Mammary epithelial cell (primary cell): ENCODE measurements at regions of chr2 and their contacts with region 1.

Region 1: DNA sequence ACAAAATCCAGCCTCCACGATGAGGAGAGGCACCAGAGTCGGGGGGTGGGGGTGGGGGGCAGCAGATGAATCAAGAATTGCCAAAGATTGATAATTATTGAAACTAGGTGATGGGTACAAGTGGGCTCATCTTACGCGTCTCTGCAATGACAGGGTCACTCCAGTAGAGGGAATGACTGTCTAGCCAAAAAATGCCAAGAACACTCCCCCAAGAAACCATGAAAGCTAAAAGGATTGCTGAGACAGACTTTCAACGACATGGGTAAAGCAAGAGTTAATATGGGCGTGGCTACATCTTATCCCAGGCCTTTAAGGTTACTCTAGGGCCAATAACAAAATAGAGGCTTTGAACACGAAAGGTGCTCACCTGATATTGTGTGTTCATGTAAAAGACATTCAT is 86.5 kb downstream of the STK39 start:
- DNase-seq: no peak
- H3K4me3 ChIP-seq: no peak overlapping the region
- H3K27ac ChIP-seq: no peak overlapping the region
- H3K4me1 ChIP-seq: peaks cover 11% of the 10 kb centered on the region
- H3K27me3 ChIP-seq: no peaks in the 10 kb centered on the region
- CTCF ChIP-seq: peak; percentile 29 to 45

Region 2: DNA sequence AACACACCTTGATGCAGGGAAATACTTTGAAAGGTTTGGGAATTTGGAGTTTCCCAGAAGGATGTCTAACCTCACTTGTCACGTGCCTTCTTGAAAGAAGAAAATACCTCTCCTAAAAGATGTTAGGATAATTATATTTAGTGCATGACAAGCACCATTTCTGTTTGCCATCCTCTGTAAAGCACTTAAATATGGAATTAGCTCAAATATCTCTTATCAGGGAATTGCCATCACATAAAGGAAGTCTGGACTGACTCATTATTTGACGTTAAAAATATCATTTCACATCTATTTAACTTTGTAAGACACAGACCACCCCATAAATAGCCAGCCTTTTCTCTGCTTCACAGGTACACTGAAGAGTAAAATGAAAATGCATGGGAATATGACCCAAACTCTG is 53.6 kb before region 1 on chr2:
- CTCF ChIA-PET with region 1: no interaction called
- dilution Hi-C with region 1: no loop called
- in situ Hi-C with region 1: no loop called
- intact Hi-C with region 1: no loop called
- DNase-seq: no peak
- H3K4me3 ChIP-seq: no peak overlapping the region
- H3K27ac ChIP-seq: no peak overlapping the region
- H3K4me1 ChIP-seq: no peaks in the 10 kb centered on the region
- H3K27me3 ChIP-seq: no peaks in the 10 kb centered on the region
- CTCF ChIP-seq: no peak

Region 3: DNA sequence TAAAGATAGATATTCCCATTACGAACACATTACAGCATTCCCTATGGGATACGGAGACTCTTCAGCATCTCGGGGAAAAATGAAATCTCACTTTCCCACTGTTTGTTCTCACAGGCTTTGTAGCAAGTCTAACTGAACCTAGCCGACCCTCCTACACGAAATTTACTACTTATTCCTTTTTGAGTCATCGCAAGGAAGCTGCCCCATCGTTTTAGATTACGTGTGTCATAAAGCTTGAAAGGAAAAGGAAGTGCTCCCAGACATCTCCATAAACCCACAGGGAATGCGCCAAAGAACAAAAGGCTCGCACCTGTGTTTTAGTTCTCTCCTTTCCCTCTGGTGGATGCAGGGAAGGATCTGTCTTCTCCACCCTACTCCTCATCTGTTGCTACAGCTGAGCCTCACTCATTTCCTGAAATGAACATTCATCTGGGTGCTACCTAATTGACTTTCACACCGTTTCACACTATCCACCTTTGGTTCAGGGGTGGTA is 162.7 kb after region 1 on chr2:
- CTCF ChIA-PET with region 1: no interaction called
- dilution Hi-C with region 1: no loop called
- in situ Hi-C with region 1: no loop called
- intact Hi-C with region 1: loop called (anchors 5 kb)
- DNase-seq: no peak
- H3K4me3 ChIP-seq: no peak overlapping the region
- H3K27ac ChIP-seq: no peak overlapping the region
- H3K4me1 ChIP-seq: peaks cover 5% of the 10 kb centered on the region
- H3K27me3 ChIP-seq: peaks cover 3% of the 10 kb centered on the region
- CTCF ChIP-seq: no peak

Region 4: GRCh38 chr2:168336864-168337263 is 176.0 kb after region 1 on chr2:
- CTCF ChIA-PET with region 1: interaction called, 9 read pairs
- dilution Hi-C with region 1: no loop called
- in situ Hi-C with region 1: no loop called
- intact Hi-C with region 1: loop called (anchors 2 kb)
- DNase-seq: peak; percentile 83
- H3K4me3 ChIP-seq: no peak overlapping the region
- H3K27ac ChIP-seq: no peak overlapping the region
- H3K4me1 ChIP-seq: peaks cover 4% of the 10 kb centered on the region
- H3K27me3 ChIP-seq: no peaks in the 10 kb centered on the region
- CTCF ChIP-seq: peak; percentile 82 to 94

Region 5: DNA sequence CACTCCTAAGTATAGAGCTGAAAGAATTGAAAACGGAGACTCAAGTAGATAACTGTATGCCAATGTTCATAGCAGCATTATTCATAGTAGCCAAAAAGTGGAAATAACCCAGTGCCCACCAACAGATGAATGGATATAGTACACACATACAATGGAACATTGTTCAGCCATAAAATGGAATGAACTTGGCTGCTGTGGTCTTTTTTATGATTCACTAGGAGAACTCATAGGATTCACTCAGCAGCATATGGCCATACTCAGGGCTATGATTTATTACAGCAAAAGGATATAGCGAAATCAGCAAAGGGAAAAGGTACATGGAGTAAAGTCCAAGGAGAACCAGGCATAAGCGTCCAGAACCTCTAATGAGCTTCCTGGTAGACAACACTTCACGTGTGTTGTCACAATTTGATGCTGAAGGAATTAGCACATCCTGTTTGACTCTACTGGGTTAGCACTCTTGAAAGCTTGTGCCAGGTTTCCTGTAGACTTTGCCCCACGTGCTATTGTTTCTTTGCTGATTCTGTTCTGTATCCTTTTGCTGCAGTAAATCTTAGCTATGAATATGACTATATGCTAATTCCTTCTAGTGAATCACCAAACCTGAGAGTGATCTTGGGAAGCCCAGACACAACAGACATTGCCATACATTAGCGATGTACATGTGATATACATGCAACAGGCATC is 713.6 kb after region 1 on chr2:
- CTCF ChIA-PET with region 1: no interaction called
- dilution Hi-C with region 1: no loop called
- in situ Hi-C with region 1: no loop called
- intact Hi-C with region 1: no loop called
- DNase-seq: no peak
- H3K4me3 ChIP-seq: no peak overlapping the region
- H3K27ac ChIP-seq: no peak overlapping the region
- H3K4me1 ChIP-seq: no peaks in the 10 kb centered on the region
- H3K27me3 ChIP-seq: no peaks in the 10 kb centered on the region
- CTCF ChIP-seq: no peak

Region 6: DNA sequence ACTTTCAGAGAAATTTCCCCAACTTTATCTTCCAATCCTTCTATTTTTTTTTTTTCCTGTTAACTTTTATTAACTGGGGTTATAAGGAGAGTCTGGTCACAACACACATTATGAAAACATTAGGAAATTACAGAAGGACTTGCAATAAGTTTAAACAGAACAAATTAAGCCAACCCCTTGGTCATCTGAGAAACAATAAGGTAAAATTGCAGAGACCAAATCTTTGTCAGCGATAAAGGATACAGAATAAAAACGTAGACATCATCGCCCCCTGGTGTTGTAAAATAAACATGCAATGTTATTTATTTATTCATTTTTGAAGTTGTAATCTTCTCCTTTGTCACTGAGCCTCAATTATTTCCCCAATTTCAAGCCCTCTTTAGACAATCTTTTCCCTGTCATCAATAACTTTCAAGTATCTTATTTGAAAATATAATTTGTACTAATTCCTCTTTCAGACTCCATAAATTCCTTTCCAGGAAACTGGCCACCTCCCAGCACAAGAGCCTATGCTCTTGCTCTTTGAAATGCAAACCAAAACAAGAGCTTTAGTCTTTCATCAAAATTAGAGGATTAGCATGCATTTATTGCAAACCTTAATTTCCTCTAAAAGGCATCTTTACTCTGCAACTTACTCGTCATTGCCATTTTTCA is 759.7 kb after region 1 on chr2:
- CTCF ChIA-PET with region 1: no interaction called
- dilution Hi-C with region 1: no loop called
- in situ Hi-C with region 1: loop called in 1 of 2 experiments (anchors 25 kb)
- intact Hi-C with region 1: loop called (anchors 10 kb)
- DNase-seq: no peak
- H3K4me3 ChIP-seq: no peak overlapping the region
- H3K27ac ChIP-seq: no peak overlapping the region
- H3K4me1 ChIP-seq: no peaks in the 10 kb centered on the region
- H3K27me3 ChIP-seq: peaks cover under 1% of the 10 kb centered on the region
- CTCF ChIP-seq: peak; percentile 40 to 52